ENCODE measurements at regions of chr11 and their contacts with region 1.

Region 1: DNA sequence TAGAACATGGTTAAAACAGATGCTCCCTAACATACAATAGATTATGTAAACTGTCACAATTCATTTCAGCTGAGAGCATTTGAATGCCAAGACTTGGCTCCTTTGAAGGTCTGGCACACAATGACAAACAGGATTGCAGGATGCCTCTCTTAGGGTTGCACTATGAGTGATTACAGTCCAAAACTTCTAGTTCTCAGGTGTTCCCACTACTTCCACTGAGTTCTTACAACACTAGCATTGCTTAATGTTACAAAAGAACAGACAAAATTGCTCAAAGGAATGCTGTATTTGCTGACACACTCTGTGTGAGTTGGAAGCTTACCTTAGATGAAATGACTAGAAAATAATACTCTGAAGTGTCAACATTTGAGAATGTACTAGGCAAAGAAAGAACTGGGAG is 2413.8 kb upstream of the RAG2 start:
- DNase-seq: peak; percentile 90
- H3K4me3 Mint-ChIP-seq: peak overlapping the region; percentile 1
- H3K27ac Mint-ChIP-seq: peak overlapping the region; percentile 71
- H3K4me1 Mint-ChIP-seq: peaks cover 14% of the 10 kb centered on the region
- H3K27me3 Mint-ChIP-seq: no peaks in the 10 kb centered on the region
- CTCF ChIP-seq: no peak

Region 2: GRCh38 chr11:38927993-38928392 is 83.8 kb before region 1 on chr11:
- CTCF ChIA-PET with region 1: no interaction called
- POLR2A ChIA-PET with region 1: no interaction called
- intact Hi-C with region 1: loop called (anchors 10 kb)
- DNase-seq: no peak
- H3K4me3 Mint-ChIP-seq: no peak overlapping the region
- H3K27ac Mint-ChIP-seq: no peak overlapping the region
- H3K4me1 Mint-ChIP-seq: no peaks in the 10 kb centered on the region
- H3K27me3 Mint-ChIP-seq: no peaks in the 10 kb centered on the region
- CTCF ChIP-seq: no peak

Region 3: GRCh38 chr11:38990161-38990560 is 21.6 kb before region 1 on chr11:
- CTCF ChIA-PET with region 1: no interaction called
- POLR2A ChIA-PET with region 1: interaction called, 18 read pairs
- intact Hi-C with region 1: no loop called
- DNase-seq: peak; percentile 26
- H3K4me3 Mint-ChIP-seq: no peak overlapping the region
- H3K27ac Mint-ChIP-seq: peak overlapping the region; percentile 14
- H3K4me1 Mint-ChIP-seq: peaks cover 15% of the 10 kb centered on the region
- H3K27me3 Mint-ChIP-seq: no peaks in the 10 kb centered on the region
- CTCF ChIP-seq: no peak